IMR-90 (cell line): ENCODE measurements at regions of chr4 and their contacts with region 1.

Region 1: GRCh38 chr4:81255524-81255923 is 40.5 kb upstream of the PRKG2 start:
- DNase-seq: peak; percentile 93
- ATAC-seq: peak; percentile 93
- H3K4me3 ChIP-seq: no peak overlapping the region
- H3K27ac ChIP-seq: no peak overlapping the region
- H3K4me1 ChIP-seq: peaks cover 5% of the 10 kb centered on the region
- H3K27me3 ChIP-seq: no peaks in the 10 kb centered on the region
- CTCF ChIP-seq: no peak
- POLR2A ChIP-seq: no peak
- RAD21 ChIP-seq: no peak

Region 2: DNA sequence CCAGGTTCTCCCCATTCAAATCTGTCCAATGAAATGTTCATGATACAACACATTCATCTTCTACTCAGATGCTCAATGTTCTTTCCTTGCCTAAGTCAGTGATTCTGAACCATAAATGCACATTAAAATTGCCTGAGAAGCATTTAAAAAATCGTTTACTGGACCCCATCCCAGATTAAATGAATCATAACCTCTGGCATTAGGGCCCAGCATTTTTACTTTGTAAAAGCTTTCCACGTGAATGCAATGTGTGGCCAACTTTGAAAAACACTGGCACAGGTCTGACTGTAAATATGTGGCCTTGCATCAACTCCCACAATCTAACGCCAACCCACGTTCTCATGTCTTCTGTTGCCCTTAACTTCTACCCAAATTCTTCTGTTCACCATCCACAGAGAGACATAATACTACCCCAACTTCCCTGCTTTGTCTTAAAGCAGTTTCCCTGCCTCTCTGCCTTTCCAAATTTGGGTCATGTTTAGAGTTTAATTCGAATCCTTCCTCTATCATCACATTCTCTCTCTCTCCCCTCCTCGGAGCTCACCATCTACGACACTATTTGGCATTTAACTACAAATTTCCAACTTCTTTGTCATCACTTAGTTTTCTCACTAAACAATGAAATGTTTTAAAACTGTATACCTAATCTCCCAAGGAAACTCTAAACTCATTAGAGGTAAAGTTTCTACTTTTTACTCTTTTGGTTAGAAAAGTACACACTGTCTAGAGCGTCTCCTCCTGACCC is 119.2 kb before region 1 on chr4:
- CTCF ChIA-PET with region 1: no interaction called
- POLR2A ChIA-PET with region 1: no interaction called
- dilution Hi-C with region 1: no loop called
- in situ Hi-C with region 1: no loop called
- intact Hi-C with region 1: loop called (anchors 5 kb)
- DNase-seq: peak; percentile 95
- ATAC-seq: peak; percentile 74
- H3K4me3 ChIP-seq: no peak overlapping the region
- H3K27ac ChIP-seq: peak overlapping the region; percentile 90
- H3K4me1 ChIP-seq: peaks cover 15% of the 10 kb centered on the region
- H3K27me3 ChIP-seq: no peaks in the 10 kb centered on the region
- CTCF ChIP-seq: no peak
- POLR2A ChIP-seq: no peak
- RAD21 ChIP-seq: no peak

Region 3: GRCh38 chr4:81214881-81215868 is 40.3 kb before region 1 on chr4 and contains the start of gene PRKG2:
- CTCF ChIA-PET with region 1: no interaction called
- POLR2A ChIA-PET with region 1: no interaction called
- dilution Hi-C with region 1: no loop called
- in situ Hi-C with region 1: no loop called
- intact Hi-C with region 1: loop called (anchors 5 kb)
- DNase-seq: no peak
- ATAC-seq: peak; percentile 76
- H3K4me3 ChIP-seq: peak within 1 kb of the TSS; percentile 64
- H3K27ac ChIP-seq: peak within 1 kb of the TSS; percentile 82
- H3K4me1 ChIP-seq: peaks cover 2% of the 10 kb centered on the region; the same call in 1 of the 2 replicates
- H3K27me3 ChIP-seq: peaks cover 2% of the 10 kb centered on the region; the same call in 1 of the 2 replicates
- CTCF ChIP-seq: no peak
- POLR2A ChIP-seq: no peak
- RAD21 ChIP-seq: no peak
- total RNA-seq, gene PRKG2: 2.0 and 2.2 TPM in 2 replicates